ENCODE measurements at regions of chr1 and their contacts with region 1.

Region 1: GRCh38 chr1:179365320-179366092 is at the start of gene AXDND1:
- DNase-seq: peak; percentile 87 to 93 (median 88)
- ATAC-seq: peak; percentile 90 to 98 (median 98)
- H3K4me3 ChIP-seq: peak within 1 kb of the TSS; percentile 50 to 79 (median 70)
- H3K27ac ChIP-seq: peak within 1 kb of the TSS; percentile 72 to 99 (median 90)
- H3K4me1 ChIP-seq: peaks cover 0 to 10% (median 1%) of the 10 kb centered on the region in 12 donors
- H3K27me3 ChIP-seq: no peaks in the 10 kb centered on the region
- CTCF ChIP-seq: peak in 2 of 12 donors; percentile 31 to 57
- POLR2A ChIP-seq: peak in 1 of 2 donors; percentile 52
- total RNA-seq, gene AXDND1: 0.08 to 0.16 TPM in 2 of 9 donors, not detected in the others

Region 2: DNA sequence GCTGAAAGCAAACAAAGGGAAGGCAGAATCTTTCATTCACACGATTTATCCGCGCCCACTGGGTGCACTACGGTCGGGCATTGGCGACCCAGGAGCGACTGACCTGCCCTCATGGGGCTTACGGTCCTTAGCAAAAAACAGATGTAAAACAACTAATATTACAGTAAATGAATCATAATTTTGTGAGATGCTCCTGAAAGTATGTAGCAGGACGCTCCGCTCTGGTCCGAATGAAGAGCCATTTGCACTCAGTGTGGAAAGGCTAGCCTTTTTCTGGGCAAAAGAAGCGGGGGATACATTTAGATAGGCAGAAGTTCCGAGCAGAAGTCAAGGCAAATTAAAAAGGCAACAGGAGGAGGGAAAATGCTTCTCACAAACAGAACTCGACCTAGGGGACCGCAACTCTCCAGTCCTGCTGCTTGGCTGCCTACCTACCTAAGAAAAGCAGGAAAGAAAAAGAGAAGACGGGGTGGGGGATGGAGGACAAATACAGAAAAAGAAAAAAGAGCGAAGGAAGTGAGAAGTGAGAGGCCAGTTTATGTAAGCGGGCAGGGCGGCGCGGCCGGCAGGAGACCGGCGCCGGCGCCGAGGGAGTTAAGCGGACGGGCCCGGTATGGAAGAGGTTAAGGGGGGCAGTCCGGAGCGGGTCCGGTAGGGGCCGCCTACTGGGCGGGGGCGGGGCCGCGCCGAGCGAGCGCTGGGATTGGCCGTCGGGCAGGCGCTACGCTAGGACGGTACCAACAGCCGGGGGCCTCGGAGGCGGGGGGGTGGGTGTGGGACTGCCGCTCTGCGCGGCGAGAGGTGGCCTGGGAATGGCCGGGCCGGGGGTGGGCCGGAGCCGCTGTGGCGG is 340.2 kb before region 1 on chr1 and contains the start of gene FAM20B:
- intact Hi-C with region 1: loop called in 1 of 10 experiments (anchors 5 kb)
- DNase-seq: peak; percentile 96 to 98 (median 96)
- ATAC-seq: peak; percentile 95 to 98 (median 96)
- H3K4me3 ChIP-seq: peak within 1 kb of the TSS; percentile 68 to 98 (median 88)
- H3K27ac ChIP-seq: peak within 1 kb of the TSS; percentile 84 to 97 (median 94)
- H3K4me1 ChIP-seq: peaks cover 0 to 46% (median 27%) of the 10 kb centered on the region in 12 donors
- H3K27me3 ChIP-seq: no peaks in the 10 kb centered on the region
- CTCF ChIP-seq: peak in 1 of 12 donors; percentile 14
- POLR2A ChIP-seq: no peak
- total RNA-seq, gene FAM20B: 38.4 to 70.1 (median 58.0) TPM

Region 3: GRCh38 chr1:179121159-179121938 is 244.2 kb before region 1 on chr1:
- intact Hi-C with region 1: loop called in 6 of 10 experiments (anchors 2 to 5 kb)
- DNase-seq: no peak
- ATAC-seq: no peak
- H3K4me3 ChIP-seq: no peak overlapping the region
- H3K27ac ChIP-seq: no peak overlapping the region
- H3K4me1 ChIP-seq: peaks cover 0 to 16% (median 3%) of the 10 kb centered on the region in 12 donors
- H3K27me3 ChIP-seq: no peaks in the 10 kb centered on the region
- CTCF ChIP-seq: peak; percentile 23 to 74 (median 58)
- POLR2A ChIP-seq: no peak

Region 4: DNA sequence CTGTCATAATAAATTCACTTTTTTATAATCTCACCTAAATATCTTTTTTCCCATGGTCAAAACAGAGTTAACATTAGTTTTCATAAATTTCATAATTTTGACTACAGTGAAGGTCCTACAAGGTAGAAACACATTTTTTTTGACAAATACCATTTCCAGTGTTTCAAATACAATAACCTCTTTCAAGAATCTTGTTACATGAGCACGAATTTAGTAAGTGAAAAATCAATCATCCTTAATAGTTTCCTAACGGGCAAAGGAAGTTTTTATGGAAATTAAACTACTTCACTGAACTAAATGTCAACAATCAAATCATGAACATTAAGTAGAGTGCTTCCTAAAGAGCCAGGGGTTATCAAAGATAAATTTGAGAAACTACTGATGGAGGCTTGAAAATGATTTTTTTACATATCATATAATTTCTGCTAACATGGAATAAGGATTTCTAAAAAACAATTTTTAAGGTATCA is 171.4 kb before region 1 on chr1:
- intact Hi-C with region 1: no loop called
- DNase-seq: no peak
- ATAC-seq: no peak
- H3K4me3 ChIP-seq: no peak overlapping the region
- H3K27ac ChIP-seq: no peak overlapping the region
- H3K4me1 ChIP-seq: peaks cover 0 to 28% (median 2%) of the 10 kb centered on the region in 12 donors
- H3K27me3 ChIP-seq: no peaks in the 10 kb centered on the region
- CTCF ChIP-seq: no peak
- POLR2A ChIP-seq: no peak

Region 5: GRCh38 chr1:179229214-179230140 is 136.0 kb before region 1 on chr1 and contains the start of gene ABL2:
- intact Hi-C with region 1: loop called in 1 of 10 experiments (anchors 10 kb)
- DNase-seq: peak; percentile 35 to 73 (median 50)
- ATAC-seq: peak; percentile 41 to 89 (median 76)
- H3K4me3 ChIP-seq: peak within 1 kb of the TSS; percentile 88 to 99 (median 98)
- H3K27ac ChIP-seq: peak within 1 kb of the TSS; percentile 54 to 92 (median 87)
- H3K4me1 ChIP-seq: peaks cover 0 to 30% (median 18%) of the 10 kb centered on the region in 12 donors
- H3K27me3 ChIP-seq: no peaks in the 10 kb centered on the region
- CTCF ChIP-seq: peak in 1 of 12 donors; percentile 6
- POLR2A ChIP-seq: no peak
- total RNA-seq, gene ABL2: 7.0 to 22.0 (median 10.5) TPM

Region 6: GRCh38 chr1:179293340-179294327 is 71.9 kb before region 1 on chr1 and contains the start of gene SOAT1:
- intact Hi-C with region 1: loop called in 6 of 10 experiments (anchors 2 to 10 kb)
- DNase-seq: peak; percentile 94 to 98 (median 96)
- ATAC-seq: peak; percentile 96 to 100 (median 100)
- H3K4me3 ChIP-seq: peak within 1 kb of the TSS; percentile 50 to 98 (median 75)
- H3K27ac ChIP-seq: peak within 1 kb of the TSS; percentile 48 to 96 (median 90)
- H3K4me1 ChIP-seq: peaks cover 0 to 39% (median 12%) of the 10 kb centered on the region in 12 donors
- H3K27me3 ChIP-seq: no peaks in the 10 kb centered on the region
- CTCF ChIP-seq: peak in 9 of 12 donors; percentile 7 to 50 (median 20)
- POLR2A ChIP-seq: peak in 1 of 2 donors; percentile 83
- total RNA-seq, gene SOAT1: 5.5 to 34.8 (median 8.1) TPM